Activated naive CD4-positive, alpha-beta T cell treated with anti-CD3 and anti-CD28 coated beads for 36 hours (primary cell): ENCODE measurements at regions of chr2 and their contacts with region 1.

Region 1: GRCh38 chr2:636641-637405 is 40.4 kb downstream of the TMEM18 start:
- DNase-seq: peak; percentile 69
- H3K4me3 Mint-ChIP-seq: peak overlapping the region; percentile 64
- H3K27ac Mint-ChIP-seq: no peak overlapping the region
- H3K4me1 Mint-ChIP-seq: peaks cover 5% of the 10 kb centered on the region
- H3K27me3 Mint-ChIP-seq: no peaks in the 10 kb centered on the region

Region 2: GRCh38 chr2:169741-170140 is 467.1 kb before region 1 on chr2:
- CTCF ChIA-PET with region 1: no interaction called
- intact Hi-C with region 1: loop called (anchors 5 kb)
- DNase-seq: no peak
- H3K4me3 Mint-ChIP-seq: no peak overlapping the region
- H3K27ac Mint-ChIP-seq: no peak overlapping the region
- H3K4me1 Mint-ChIP-seq: peaks cover 6% of the 10 kb centered on the region
- H3K27me3 Mint-ChIP-seq: no peaks in the 10 kb centered on the region

Region 3: GRCh38 chr2:290090-290722 is 346.6 kb before region 1 on chr2:
- CTCF ChIA-PET with region 1: no interaction called
- intact Hi-C with region 1: loop called (anchors 2 kb)
- DNase-seq: peak; percentile 73
- H3K4me3 Mint-ChIP-seq: peak overlapping the region; percentile 66
- H3K27ac Mint-ChIP-seq: no peak overlapping the region
- H3K4me1 Mint-ChIP-seq: peaks cover 2% of the 10 kb centered on the region
- H3K27me3 Mint-ChIP-seq: peaks cover 28% of the 10 kb centered on the region

Region 4: GRCh38 chr2:529425-529824 is 107.4 kb before region 1 on chr2:
- CTCF ChIA-PET with region 1: interaction called, 4 read pairs
- intact Hi-C with region 1: loop called (anchors 1 kb)
- DNase-seq: no peak
- H3K4me3 Mint-ChIP-seq: no peak overlapping the region
- H3K27ac Mint-ChIP-seq: no peak overlapping the region
- H3K4me1 Mint-ChIP-seq: no peaks in the 10 kb centered on the region
- H3K27me3 Mint-ChIP-seq: peaks cover 12% of the 10 kb centered on the region

Region 5: GRCh38 chr2:667332-667999 is 30.6 kb after region 1 on chr2:
- CTCF ChIA-PET with region 1: interaction called, 3 read pairs
- intact Hi-C with region 1: loop called (anchors 2 kb)
- DNase-seq: peak; percentile 60
- H3K4me3 Mint-ChIP-seq: no peak overlapping the region
- H3K27ac Mint-ChIP-seq: peak overlapping the region; percentile 44
- H3K4me1 Mint-ChIP-seq: peaks cover 35% of the 10 kb centered on the region
- H3K27me3 Mint-ChIP-seq: no peaks in the 10 kb centered on the region